ENCODE measurements at regions of chr16 and their contacts with region 1.

Region 1: GRCh38 chr16:24336998-24337397 is 80.9 kb downstream of the CACNG3 start:
- DNase-seq: no peak
- ATAC-seq: no peak
- H3K4me3 ChIP-seq: no peak overlapping the region
- H3K27ac ChIP-seq: no peak overlapping the region
- H3K4me1 ChIP-seq: no peaks in the 10 kb centered on the region; a peak in 1 of 5 replicates
- H3K27me3 ChIP-seq: peaks cover 15 to 36% of the 10 kb centered on the region in 2 experiments; a peak in 2 of 5 replicates
- CTCF ChIP-seq: 0 out of 6 replicates have a peak, but pooled peaks of 1 of the 3 experiments have one; percentile 15
- EP300 ChIP-seq: no peak
- POLR2A ChIP-seq: no peak
- RAD21 ChIP-seq: peak in 1 of 2 experiments; percentile 19; a peak in 1 of 4 replicates

Region 2: DNA sequence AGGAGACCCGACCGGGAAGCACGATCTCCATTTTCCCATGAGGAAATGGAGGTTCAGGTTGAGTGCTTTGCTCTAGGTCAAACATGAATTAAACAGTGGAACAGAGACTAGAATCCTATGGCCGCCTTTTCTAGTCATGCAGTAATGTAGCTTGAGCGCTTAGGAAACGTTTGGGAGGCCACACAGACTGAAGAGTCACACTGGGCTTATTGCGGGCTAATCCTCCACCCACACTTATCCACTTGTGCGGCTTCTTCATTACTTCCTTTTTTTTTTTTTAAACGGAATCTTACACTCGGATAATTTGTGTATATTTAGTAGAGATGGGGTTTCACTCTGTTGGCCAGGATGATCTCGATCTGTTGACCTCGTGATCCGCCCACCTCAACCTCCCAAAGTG is 54.9 kb before region 1 on chr16:
- CTCF ChIA-PET with region 1: no interaction called
- POLR2A ChIA-PET with region 1: no interaction called
- in situ Hi-C with region 1: no loop called
- intact Hi-C with region 1: no loop called
- DNase-seq: no peak
- ATAC-seq: no peak
- H3K4me3 ChIP-seq: no peak overlapping the region
- H3K27ac ChIP-seq: no peak overlapping the region
- H3K4me1 ChIP-seq: no peaks in the 10 kb centered on the region
- H3K27me3 ChIP-seq: peaks cover 11 to 17% of the 10 kb centered on the region in 2 experiments
- CTCF ChIP-seq: no peak
- EP300 ChIP-seq: no peak
- POLR2A ChIP-seq: no peak
- RAD21 ChIP-seq: no peak

Region 3: DNA sequence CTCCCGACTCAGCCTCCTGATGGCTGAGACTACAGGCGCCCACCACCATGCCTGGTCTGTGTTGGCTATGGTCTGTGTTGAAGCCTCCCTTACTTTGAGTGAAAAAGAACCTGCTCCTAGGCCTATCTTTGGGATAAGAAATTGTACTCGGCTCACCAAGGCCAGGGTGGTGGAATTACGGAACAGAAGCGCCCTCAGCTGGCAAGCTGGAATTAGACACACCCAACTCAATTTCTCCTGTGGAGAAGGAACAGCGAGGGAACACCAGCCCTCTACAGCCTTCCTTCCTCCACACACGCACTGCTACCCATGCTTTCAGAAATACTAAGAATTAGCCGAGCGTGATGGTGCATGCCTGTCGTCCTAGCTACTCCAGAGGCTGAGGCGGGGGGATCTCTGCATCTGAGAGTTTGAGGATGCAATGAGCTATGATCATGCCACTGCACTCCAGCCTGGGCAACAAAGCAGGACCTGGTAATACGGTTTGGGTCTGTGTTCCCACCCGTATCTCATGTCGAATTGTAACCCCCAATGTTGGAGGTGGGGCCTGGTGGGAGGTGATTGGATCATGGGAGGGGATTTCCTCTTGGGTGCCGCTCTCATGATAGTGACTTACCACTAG is 162.3 kb after region 1 on chr16:
- CTCF ChIA-PET with region 1: no interaction called
- POLR2A ChIA-PET with region 1: no interaction called
- in situ Hi-C with region 1: no loop called
- intact Hi-C with region 1: loop called (anchors 10 kb)
- DNase-seq: peak; percentile 44 to 71 (median 58)
- ATAC-seq: peak; percentile 96
- H3K4me3 ChIP-seq: no peak overlapping the region
- H3K27ac ChIP-seq: no peak overlapping the region
- H3K4me1 ChIP-seq: peaks cover 0 to 3% of the 10 kb centered on the region in 2 experiments; a peak in 1 of 5 replicates
- H3K27me3 ChIP-seq: peaks cover 3 to 10% of the 10 kb centered on the region in 2 experiments; a peak in 3 of 5 replicates
- CTCF ChIP-seq: peak; percentile 81 to 92 (median 83)
- EP300 ChIP-seq: no peak
- POLR2A ChIP-seq: no peak
- RAD21 ChIP-seq: peak; percentile 76 to 92